GM12878 (cell line): ENCODE measurements at regions of chr6 and their contacts with region 1.

Region 1: DNA sequence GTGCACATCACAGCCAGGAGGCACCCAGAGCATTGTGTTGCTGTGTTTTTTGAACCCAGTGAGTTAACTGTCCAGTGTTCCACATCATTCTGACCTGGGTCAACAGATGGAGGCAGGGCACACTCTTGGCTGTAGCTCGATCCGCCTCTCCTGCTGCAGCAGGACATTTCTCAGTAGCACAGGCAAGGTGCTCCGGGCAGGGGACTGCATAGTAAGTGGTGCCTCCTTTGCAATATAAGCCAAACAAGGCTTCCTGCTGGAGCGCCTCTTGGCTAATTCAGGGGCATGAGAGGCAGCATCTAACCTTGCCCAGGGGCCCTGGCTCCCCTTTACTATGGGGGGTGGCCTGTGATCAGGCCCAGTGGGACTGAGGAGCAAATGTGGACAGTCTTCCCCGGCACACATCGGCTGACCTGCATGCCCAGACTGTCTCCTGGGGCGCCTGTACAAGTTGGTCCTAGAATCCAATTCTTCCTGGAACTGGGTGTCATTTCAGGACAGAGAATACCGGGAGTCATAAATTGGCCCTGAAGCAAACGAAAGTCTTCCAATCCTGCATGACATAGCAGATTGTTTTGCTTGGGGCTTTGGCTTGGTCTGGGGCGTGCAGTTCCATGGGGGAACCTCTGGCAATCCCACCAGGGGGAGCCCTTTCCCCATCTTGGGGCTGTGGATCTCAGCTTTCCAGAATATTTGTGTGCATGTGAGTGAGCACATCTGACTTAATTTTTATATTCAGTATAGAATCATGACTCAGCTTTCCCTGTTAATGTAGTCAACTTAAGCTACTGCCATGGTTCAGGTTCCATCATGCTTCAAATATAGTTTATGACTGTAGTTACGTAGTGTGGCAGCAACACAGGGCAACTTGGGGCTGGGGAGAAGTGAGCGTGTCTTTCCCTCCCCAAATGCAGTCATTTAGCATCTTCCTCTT is 56.0 kb upstream of the DDR1 start:
- DNase-seq: no peak
- ATAC-seq: peak; percentile 94
- H3K4me3 ChIP-seq: no peak overlapping the region
- H3K27ac ChIP-seq: no peak overlapping the region
- H3K4me1 ChIP-seq: peaks cover 16% of the 10 kb centered on the region
- H3K27me3 ChIP-seq: no peaks in the 10 kb centered on the region
- CTCF ChIP-seq: peak; percentile 88 to 97 (median 90); a peak in 5 of 6 replicates
- EP300 ChIP-seq: no peak
- POLR2A ChIP-seq: no peak
- RAD21 ChIP-seq: peak; percentile 99

Region 2: GRCh38 chr6:30742316-30743098 is 85.8 kb before region 1 on chr6 and contains the start of gene FLOT1:
- CTCF ChIA-PET with region 1: interaction called, 15 read pairs
- POLR2A ChIA-PET with region 1: no interaction called
- RAD21 ChIA-PET with region 1: interaction called, 45 read pairs
- SMC1A ChIA-PET with region 1: interaction called, 16 read pairs
- in situ Hi-C with region 1: no loop called
- intact Hi-C with region 1: no loop called
- DNase-seq: peak; percentile 80
- ATAC-seq: peak; percentile 80
- H3K4me3 ChIP-seq: peak within 1 kb of the TSS; percentile 95
- H3K27ac ChIP-seq: peak within 1 kb of the TSS; percentile 72
- H3K4me1 ChIP-seq: peaks cover 23% of the 10 kb centered on the region
- H3K27me3 ChIP-seq: no peaks in the 10 kb centered on the region
- CTCF ChIP-seq: no peak
- EP300 ChIP-seq: peak in 1 of 2 experiments; percentile 12; a peak in 1 of 4 replicates
- POLR2A ChIP-seq: peak; percentile 83
- RAD21 ChIP-seq: no peak
- polyA plus RNA-seq, gene FLOT1: 12.3 to 16.8 TPM

Region 3: DNA sequence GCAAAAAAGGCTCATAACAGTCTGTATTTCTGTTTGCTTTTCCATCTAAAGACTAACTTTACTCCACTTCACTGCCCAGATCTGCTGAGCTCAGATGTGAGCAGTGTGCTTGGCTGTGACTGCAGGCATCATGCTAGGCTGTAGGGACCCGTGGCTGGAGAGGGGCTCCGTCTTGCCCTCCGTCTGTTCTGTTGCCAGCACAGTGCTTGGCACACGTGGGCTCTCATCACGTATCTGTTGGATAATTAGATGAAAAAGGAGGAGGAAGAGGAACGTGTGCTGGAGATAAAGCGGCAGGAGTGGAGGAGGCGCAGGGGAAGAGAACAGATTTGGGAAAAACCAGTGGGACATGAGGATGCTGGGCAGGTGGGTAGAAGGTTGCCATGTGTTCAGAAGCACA is 26.3 kb before region 1 on chr6:
- CTCF ChIA-PET with region 1: no interaction called
- POLR2A ChIA-PET with region 1: no interaction called
- RAD21 ChIA-PET with region 1: no interaction called
- SMC1A ChIA-PET with region 1: no interaction called
- in situ Hi-C with region 1: no loop called
- intact Hi-C with region 1: no loop called
- DNase-seq: no peak
- ATAC-seq: no peak
- H3K4me3 ChIP-seq: no peak overlapping the region
- H3K27ac ChIP-seq: no peak overlapping the region
- H3K4me1 ChIP-seq: no peaks in the 10 kb centered on the region
- H3K27me3 ChIP-seq: no peaks in the 10 kb centered on the region
- CTCF ChIP-seq: no peak
- EP300 ChIP-seq: no peak
- POLR2A ChIP-seq: no peak
- RAD21 ChIP-seq: no peak

Region 4: GRCh38 chr6:30844091-30844535 is 15.8 kb after region 1 on chr6:
- CTCF ChIA-PET with region 1: interaction called, 4 read pairs
- POLR2A ChIA-PET with region 1: interaction called, 4 read pairs
- RAD21 ChIA-PET with region 1: interaction called, 6 read pairs
- SMC1A ChIA-PET with region 1: interaction called, 35 read pairs
- in situ Hi-C with region 1: no loop called
- intact Hi-C with region 1: no loop called
- DNase-seq: no peak
- ATAC-seq: no peak
- H3K4me3 ChIP-seq: no peak overlapping the region
- H3K27ac ChIP-seq: no peak overlapping the region
- H3K4me1 ChIP-seq: no peaks in the 10 kb centered on the region
- H3K27me3 ChIP-seq: no peaks in the 10 kb centered on the region; a peak in 1 of 4 replicates
- CTCF ChIP-seq: no peak
- EP300 ChIP-seq: no peak
- POLR2A ChIP-seq: no peak
- RAD21 ChIP-seq: no peak

Region 5: GRCh38 chr6:30883685-30884520 is 55.6 kb after region 1 on chr6 and contains the start of gene DDR1:
- CTCF ChIA-PET with region 1: interaction called, 90 read pairs
- POLR2A ChIA-PET with region 1: interaction called, 7 read pairs
- RAD21 ChIA-PET with region 1: interaction called, 144 read pairs
- SMC1A ChIA-PET with region 1: interaction called, 72 read pairs
- in situ Hi-C with region 1: loop called (anchors 5 kb)
- intact Hi-C with region 1: no loop called
- DNase-seq: no peak
- ATAC-seq: peak; percentile 65
- H3K4me3 ChIP-seq: peak within 1 kb of the TSS; percentile 75
- H3K27ac ChIP-seq: peak within 1 kb of the TSS; percentile 81
- H3K4me1 ChIP-seq: peaks cover 38% of the 10 kb centered on the region
- H3K27me3 ChIP-seq: no peaks in the 10 kb centered on the region
- CTCF ChIP-seq: no peak
- EP300 ChIP-seq: no peak
- POLR2A ChIP-seq: peak; percentile 18; the same call in 1 of the 2 replicates
- RAD21 ChIP-seq: no peak
- polyA plus RNA-seq, gene DDR1: 1.1 to 2.2 TPM

Region 6: GRCh38 chr6:31068669-31069340 is 240.5 kb after region 1 on chr6:
- CTCF ChIA-PET with region 1: interaction called, 30 read pairs
- POLR2A ChIA-PET with region 1: no interaction called
- RAD21 ChIA-PET with region 1: interaction called, 7 read pairs
- SMC1A ChIA-PET with region 1: interaction called, 7 read pairs
- in situ Hi-C with region 1: no loop called
- intact Hi-C with region 1: no loop called
- DNase-seq: no peak
- ATAC-seq: peak; percentile 99
- H3K4me3 ChIP-seq: no peak overlapping the region
- H3K27ac ChIP-seq: no peak overlapping the region
- H3K4me1 ChIP-seq: no peaks in the 10 kb centered on the region; the same call in 1 of the 2 replicates
- H3K27me3 ChIP-seq: no peaks in the 10 kb centered on the region
- CTCF ChIP-seq: peak; percentile 89 to 93 (median 90); a peak in 5 of 6 replicates
- EP300 ChIP-seq: no peak
- POLR2A ChIP-seq: no peak
- RAD21 ChIP-seq: peak; percentile 76